ENCODE measurements at regions of chr6 and their contacts with region 1.

Region 1: DNA sequence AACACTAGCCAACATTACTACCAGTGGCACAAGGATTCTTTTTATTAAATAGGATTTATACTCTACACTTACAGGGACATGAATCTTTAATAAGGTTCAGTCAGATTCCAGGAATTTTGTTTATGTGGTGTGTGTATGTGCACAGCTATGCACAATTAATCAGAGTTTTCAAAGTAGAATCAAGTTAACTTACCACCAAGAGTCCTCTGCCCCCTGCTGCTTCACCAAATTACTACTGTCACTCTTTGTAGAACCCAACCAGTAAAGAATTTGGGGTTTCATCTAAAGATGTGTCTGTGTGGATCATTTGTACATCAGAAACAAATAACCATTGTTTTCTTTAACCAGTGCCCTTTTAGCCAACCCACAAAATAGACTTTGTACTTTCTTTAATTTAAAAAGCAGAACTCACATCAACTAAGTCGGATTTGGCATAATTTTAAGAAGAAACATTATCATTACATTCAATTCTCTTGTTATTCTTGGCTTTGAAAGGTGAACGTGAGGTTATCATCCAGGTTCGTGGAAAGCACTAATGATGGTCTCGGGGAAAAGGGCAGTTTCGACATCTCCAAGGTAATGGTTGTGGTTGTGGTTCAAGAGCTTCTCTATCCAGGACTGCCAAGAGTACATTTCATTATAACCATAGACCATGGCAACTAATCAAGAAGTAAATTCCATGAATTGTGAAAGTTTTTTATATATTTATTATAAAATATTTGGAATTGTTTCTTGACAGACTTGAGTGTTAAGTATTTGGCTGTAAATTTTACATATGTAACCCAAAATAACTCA is 514.3 kb upstream of the ID4 start:
- DNase-seq: peak; percentile 48
- ATAC-seq: no peak
- H3K4me3 ChIP-seq: no peak overlapping the region
- H3K27ac ChIP-seq: no peak overlapping the region
- H3K4me1 ChIP-seq: no peaks in the 10 kb centered on the region
- H3K27me3 ChIP-seq: no peaks in the 10 kb centered on the region
- CTCF ChIP-seq: peak; percentile 57

Region 2: DNA sequence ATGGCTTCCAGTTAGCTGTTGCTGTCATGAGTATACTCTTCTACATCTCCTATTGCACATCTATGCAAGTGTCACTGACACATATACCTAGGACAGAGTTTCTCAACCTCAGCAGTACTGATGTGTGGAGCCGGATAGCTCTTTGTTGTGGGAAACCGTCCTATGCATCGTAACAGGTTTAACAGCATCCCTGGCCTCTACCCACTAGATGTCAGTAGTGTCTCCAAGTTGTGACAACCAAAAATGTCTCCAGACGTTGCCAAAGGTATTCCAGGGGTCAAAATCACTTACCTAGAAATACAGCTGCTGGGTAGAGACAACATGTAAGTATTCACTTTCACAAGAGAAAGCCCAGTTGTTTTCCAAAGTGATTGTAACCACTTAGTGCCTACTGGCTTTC is 298.2 kb before region 1 on chr6:
- CTCF ChIA-PET with region 1: no interaction called
- POLR2A ChIA-PET with region 1: no interaction called
- intact Hi-C with region 1: loop called (anchors 1 kb)
- DNase-seq: peak; percentile 81
- ATAC-seq: peak; percentile 91
- H3K4me3 ChIP-seq: no peak overlapping the region
- H3K27ac ChIP-seq: no peak overlapping the region
- H3K4me1 ChIP-seq: peaks cover 9% of the 10 kb centered on the region; the same call in 1 of the 2 replicates
- H3K27me3 ChIP-seq: no peaks in the 10 kb centered on the region
- CTCF ChIP-seq: peak; percentile 85

Region 3: DNA sequence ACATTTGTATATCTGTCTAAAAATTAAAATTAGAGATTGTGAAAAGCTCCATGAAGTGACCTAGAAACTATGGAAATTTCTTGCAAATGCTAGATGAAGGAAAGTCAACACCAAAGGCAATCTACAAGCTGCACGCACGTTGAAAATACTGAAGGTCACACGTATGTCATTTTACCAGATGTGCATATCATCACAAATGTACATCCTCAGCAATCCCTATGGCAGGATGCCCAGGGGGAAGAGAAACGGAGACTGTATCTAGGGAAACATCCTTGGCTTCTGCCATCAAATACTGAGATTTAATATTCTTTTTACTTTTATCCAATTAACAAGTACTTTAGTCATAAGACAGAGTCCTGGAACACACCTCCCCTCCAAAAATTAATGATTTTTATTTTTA is 263.8 kb before region 1 on chr6:
- CTCF ChIA-PET with region 1: no interaction called
- POLR2A ChIA-PET with region 1: no interaction called
- intact Hi-C with region 1: no loop called
- DNase-seq: no peak
- ATAC-seq: no peak
- H3K4me3 ChIP-seq: no peak overlapping the region
- H3K27ac ChIP-seq: no peak overlapping the region
- H3K4me1 ChIP-seq: no peaks in the 10 kb centered on the region
- H3K27me3 ChIP-seq: no peaks in the 10 kb centered on the region
- CTCF ChIP-seq: no peak

Region 4: DNA sequence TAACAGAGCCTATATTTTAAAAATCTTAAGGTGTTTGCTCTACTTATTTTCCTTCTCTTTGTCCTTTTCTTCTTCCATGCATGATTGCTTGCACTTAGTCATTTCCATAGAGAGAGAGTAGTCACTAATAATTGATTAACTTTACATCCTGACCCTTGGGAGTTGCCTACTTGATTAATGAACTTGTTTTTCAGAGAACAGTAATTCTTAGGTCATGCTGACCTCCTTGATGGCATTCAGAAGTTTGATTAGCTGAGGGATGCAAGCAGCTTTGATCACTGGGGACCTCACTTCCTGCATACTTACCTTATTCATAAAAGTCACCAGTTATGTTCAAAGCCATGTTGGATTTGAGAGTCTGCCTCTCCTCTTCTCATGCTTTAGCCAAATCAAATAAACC is 201.4 kb before region 1 on chr6:
- CTCF ChIA-PET with region 1: no interaction called
- POLR2A ChIA-PET with region 1: no interaction called
- intact Hi-C with region 1: no loop called
- DNase-seq: no peak
- ATAC-seq: no peak
- H3K4me3 ChIP-seq: no peak overlapping the region
- H3K27ac ChIP-seq: no peak overlapping the region
- H3K4me1 ChIP-seq: no peaks in the 10 kb centered on the region
- H3K27me3 ChIP-seq: no peaks in the 10 kb centered on the region
- CTCF ChIP-seq: no peak

Region 5: GRCh38 chr6:19204443-19204842 is 118.4 kb before region 1 on chr6:
- CTCF ChIA-PET with region 1: interaction called, 3 read pairs
- POLR2A ChIA-PET with region 1: no interaction called
- intact Hi-C with region 1: loop called (anchors 1 kb)
- DNase-seq: peak; percentile 28
- ATAC-seq: no peak
- H3K4me3 ChIP-seq: no peak overlapping the region
- H3K27ac ChIP-seq: no peak overlapping the region
- H3K4me1 ChIP-seq: peaks cover 6% of the 10 kb centered on the region
- H3K27me3 ChIP-seq: no peaks in the 10 kb centered on the region
- CTCF ChIP-seq: peak; percentile 56

Region 6: DNA sequence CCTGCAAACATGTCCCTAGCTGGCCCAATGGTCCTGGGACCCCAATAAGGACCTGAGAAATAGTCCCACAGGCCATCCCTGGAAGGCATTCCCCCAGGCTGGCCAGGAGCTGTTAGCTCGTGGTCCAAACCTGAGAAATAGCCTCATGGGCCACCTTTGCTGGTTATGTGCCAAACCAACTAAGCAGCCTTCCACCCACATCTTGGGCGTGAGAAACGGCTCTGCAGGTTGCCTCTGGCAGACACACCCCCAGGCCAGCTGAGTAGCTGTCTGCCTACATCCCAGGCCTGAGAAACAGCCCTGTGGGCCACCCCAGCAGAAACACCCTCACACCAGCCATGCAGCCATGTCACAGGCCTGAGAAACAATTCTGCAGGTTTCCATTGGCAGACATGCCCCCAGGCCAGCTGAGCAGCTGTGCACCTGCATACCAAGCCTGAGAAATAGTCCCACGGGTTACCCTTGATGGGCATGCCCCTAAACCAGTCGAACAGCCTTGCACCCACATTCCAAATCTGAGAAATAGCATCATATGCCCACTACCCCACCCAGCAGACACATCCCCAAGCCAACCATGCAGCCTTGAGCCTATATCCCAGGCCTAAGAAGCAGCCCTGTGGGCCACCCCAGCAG is 53.4 kb before region 1 on chr6:
- CTCF ChIA-PET with region 1: no interaction called
- POLR2A ChIA-PET with region 1: no interaction called
- intact Hi-C with region 1: no loop called
- DNase-seq: peak; percentile 63
- ATAC-seq: no peak
- H3K4me3 ChIP-seq: no peak overlapping the region
- H3K27ac ChIP-seq: no peak overlapping the region; the same call in 1 of the 2 replicates
- H3K4me1 ChIP-seq: peaks cover 24% of the 10 kb centered on the region
- H3K27me3 ChIP-seq: no peaks in the 10 kb centered on the region
- CTCF ChIP-seq: no peak

Region 7: GRCh38 chr6:19368509-19368908 is 45.6 kb after region 1 on chr6:
- CTCF ChIA-PET with region 1: no interaction called
- POLR2A ChIA-PET with region 1: no interaction called
- intact Hi-C with region 1: no loop called
- DNase-seq: peak; percentile 75
- ATAC-seq: peak; percentile 83
- H3K4me3 ChIP-seq: no peak overlapping the region
- H3K27ac ChIP-seq: no peak overlapping the region
- H3K4me1 ChIP-seq: peaks cover 13% of the 10 kb centered on the region
- H3K27me3 ChIP-seq: no peaks in the 10 kb centered on the region
- CTCF ChIP-seq: peak; percentile 34; the same call in 1 of the 2 replicates

Measured in PC-3 (cell line).